Caco-2 (cell line): ENCODE measurements at regions of chr10 and their contacts with region 1.

Region 1: DNA sequence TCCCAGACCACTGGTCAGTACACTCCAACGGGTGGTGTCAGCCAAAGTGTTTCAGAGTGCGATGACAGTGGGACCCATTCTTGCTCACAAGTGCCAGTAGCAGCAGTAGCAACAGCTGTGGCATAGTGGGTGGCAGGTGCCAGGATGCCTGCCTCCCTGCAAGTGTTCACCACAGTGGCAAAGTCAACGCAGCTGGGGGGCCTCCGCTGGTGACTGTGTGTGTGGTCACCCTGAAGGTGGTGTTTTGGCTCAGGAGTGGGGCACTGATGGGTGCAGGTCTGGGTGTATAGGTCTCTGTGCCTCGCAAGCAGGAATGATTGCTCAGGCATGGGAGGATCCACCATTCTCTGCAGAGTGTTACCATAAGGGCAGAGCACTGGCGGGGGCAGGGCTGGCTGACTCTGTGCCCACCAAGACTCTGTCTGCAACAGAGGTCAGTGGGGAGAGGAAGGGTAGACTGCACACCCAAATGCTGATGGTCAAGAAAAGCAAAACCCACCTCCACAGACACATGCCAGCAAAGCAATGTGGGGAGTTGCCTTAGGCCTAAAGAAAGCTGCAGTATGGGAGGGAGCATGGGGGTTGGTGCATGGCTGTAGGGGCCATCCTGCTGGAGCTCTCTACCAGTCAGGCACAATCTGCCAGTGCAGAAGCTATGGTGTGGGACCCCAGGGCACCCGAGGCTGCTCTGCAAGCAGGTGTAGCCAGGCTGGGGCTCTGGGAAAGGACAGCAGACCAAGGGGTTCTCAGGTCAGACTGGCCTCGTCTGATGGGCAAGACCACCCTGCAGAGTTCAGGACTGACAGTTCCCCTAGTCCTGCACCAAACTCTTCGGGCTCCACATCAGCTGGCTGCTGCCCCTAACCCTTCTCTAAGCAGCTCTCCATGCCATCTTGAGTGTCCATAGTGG is 368.1 kb downstream of the CTNNA3 start:
- DNase-seq: no peak
- H3K4me3 ChIP-seq: no peak overlapping the region
- H3K4me3 Mint-ChIP-seq: no peak overlapping the region
- H3K27ac Mint-ChIP-seq: no peak overlapping the region
- H3K4me1 ChIP-seq: no peaks in the 10 kb centered on the region
- H3K4me1 Mint-ChIP-seq: no peaks in the 10 kb centered on the region
- H3K27me3 ChIP-seq: no peaks in the 10 kb centered on the region
- H3K27me3 Mint-ChIP-seq: no peaks in the 10 kb centered on the region
- CTCF ChIP-seq: no peak

Region 2: DNA sequence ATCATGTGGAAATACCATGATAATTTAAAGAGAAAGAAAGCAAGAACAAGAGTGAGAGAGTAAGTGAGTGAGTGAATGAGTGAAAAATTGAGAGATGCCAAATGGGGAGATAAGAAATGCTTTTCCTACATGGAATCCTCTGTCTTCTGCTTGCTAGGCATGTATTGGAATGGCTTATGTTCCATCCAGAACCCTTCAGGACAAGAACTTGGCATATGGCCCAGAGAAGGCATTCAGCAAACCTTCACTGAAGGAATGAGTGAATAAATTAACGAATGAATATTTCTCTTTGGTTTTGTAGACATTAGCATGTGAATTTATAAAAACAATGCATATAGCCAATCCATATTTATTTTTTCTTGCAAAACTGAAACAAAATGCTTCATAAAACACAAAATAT is 239.8 kb before region 1 on chr10:
- CTCF ChIA-PET with region 1: no interaction called
- POLR2A ChIA-PET with region 1: interaction called, 13 read pairs
- intact Hi-C with region 1: no loop called
- DNase-seq: no peak
- H3K4me3 ChIP-seq: no peak overlapping the region
- H3K4me3 Mint-ChIP-seq: no peak overlapping the region
- H3K27ac Mint-ChIP-seq: no peak overlapping the region
- H3K4me1 ChIP-seq: no peaks in the 10 kb centered on the region
- H3K4me1 Mint-ChIP-seq: no peaks in the 10 kb centered on the region
- H3K27me3 ChIP-seq: no peaks in the 10 kb centered on the region
- H3K27me3 Mint-ChIP-seq: no peaks in the 10 kb centered on the region
- CTCF ChIP-seq: no peak

Region 3: DNA sequence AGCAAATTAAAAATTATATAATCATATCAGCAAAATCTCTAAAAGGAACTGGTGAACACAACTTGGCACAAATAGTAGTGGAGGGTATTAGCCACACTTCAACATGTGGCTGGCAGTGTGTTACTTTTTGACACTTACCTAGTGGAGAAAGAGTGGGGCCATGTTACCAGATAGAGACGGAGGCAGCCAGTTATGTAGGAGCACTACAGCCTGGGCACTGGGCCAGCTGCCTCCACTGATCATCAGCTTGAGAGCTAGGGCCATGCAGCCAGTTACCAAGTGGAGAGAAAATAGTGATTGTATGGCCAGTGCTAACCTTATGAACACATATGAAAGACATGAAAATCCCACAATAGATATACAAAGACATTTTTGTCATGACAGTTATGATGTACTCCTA is 125.0 kb after region 1 on chr10:
- CTCF ChIA-PET with region 1: no interaction called
- POLR2A ChIA-PET with region 1: no interaction called
- intact Hi-C with region 1: no loop called
- DNase-seq: no peak
- H3K4me3 ChIP-seq: no peak overlapping the region
- H3K4me3 Mint-ChIP-seq: no peak overlapping the region
- H3K27ac Mint-ChIP-seq: no peak overlapping the region
- H3K4me1 ChIP-seq: no peaks in the 10 kb centered on the region
- H3K4me1 Mint-ChIP-seq: no peaks in the 10 kb centered on the region
- H3K27me3 ChIP-seq: no peaks in the 10 kb centered on the region
- H3K27me3 Mint-ChIP-seq: no peaks in the 10 kb centered on the region
- CTCF ChIP-seq: no peak